ENCODE measurements at regions of chr5 and their contacts with region 1.

Region 1: GRCh38 chr5:119255571-119256356 is 100.1 kb upstream of the TNFAIP8 start:
- DNase-seq: no peak
- ATAC-seq: no peak; the same call in 1 of the 2 replicates
- H3K4me3 ChIP-seq: no peak overlapping the region
- H3K27ac ChIP-seq: no peak overlapping the region
- H3K4me1 ChIP-seq: no peaks in the 10 kb centered on the region
- H3K27me3 ChIP-seq: no peaks in the 10 kb centered on the region
- CTCF ChIP-seq: no peak

Region 2: DNA sequence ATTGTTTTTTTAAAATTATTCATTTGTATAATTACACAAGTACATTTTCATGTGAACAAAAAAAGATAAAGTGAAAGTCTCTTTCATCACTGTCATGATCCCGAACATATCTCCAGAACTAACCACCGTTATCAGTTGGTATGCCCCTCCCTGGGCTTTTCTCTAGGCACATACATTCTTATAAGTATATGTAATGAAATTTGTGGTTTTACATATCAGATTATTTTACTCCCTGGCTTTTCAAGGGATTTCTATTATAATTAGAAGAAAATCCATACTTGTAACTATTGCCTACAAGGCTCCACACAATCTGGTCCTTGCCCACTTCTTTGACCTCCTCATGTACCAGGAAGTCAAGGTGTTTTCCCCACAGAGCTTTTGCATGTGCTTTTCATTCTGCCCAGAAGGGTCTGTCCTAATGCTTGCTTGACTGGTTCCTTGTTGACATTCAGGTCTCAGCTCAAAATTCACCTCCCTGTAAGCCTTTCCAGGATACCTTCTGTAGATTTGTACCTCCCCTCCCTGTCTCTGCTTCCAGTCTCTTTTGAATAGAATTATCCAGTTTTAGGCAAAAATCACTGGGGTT is 162.9 kb after region 1 on chr5:
- CTCF ChIA-PET with region 1: no interaction called
- POLR2A ChIA-PET with region 1: no interaction called
- in situ Hi-C with region 1: no loop called
- intact Hi-C with region 1: loop called (anchors 5 kb)
- DNase-seq: no peak
- ATAC-seq: no peak
- H3K4me3 ChIP-seq: no peak overlapping the region
- H3K27ac ChIP-seq: no peak overlapping the region
- H3K4me1 ChIP-seq: no peaks in the 10 kb centered on the region
- H3K27me3 ChIP-seq: no peaks in the 10 kb centered on the region; the same call in 1 of the 2 replicates
- CTCF ChIP-seq: no peak

Measured in Panc1 (cell line).